CD14-positive monocyte (primary cell): ENCODE measurements at regions of chr1 and their contacts with region 1.

Region 1: DNA sequence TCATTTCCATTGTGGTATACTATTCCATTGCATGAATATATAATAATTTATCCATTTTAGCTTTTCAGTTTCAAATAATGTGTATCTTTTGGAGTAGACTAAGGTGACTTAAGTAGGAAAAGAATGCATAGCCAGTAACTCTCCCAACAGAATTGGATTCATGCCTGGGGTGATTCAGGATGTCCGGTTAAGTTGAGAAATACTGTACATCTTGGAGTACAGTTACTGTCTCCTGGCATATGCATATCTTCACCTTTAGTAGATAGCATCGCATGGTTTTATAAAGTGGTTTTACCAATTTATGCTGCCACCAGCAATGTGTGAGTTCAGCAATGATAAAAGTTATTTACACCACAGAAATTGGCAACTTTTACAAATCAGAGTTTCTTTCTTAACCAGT is 18.6 kb upstream of the SLC6A9 start:
- DNase-seq: no peak
- H3K4me3 ChIP-seq: no peak overlapping the region
- H3K4me3 Mint-ChIP-seq: no peak overlapping the region
- H3K27ac ChIP-seq: no peak overlapping the region
- H3K27ac Mint-ChIP-seq: no peak overlapping the region
- H3K4me1 ChIP-seq: peaks cover 7 to 12% of the 10 kb centered on the region in 2 donors
- H3K4me1 Mint-ChIP-seq: peaks cover 15% of the 10 kb centered on the region
- H3K27me3 ChIP-seq: no peaks in the 10 kb centered on the region
- H3K27me3 Mint-ChIP-seq: peaks cover 0 to 7% (median 0%) of the 10 kb centered on the region in 3 donors
- CTCF ChIP-seq: no peak

Region 2: DNA sequence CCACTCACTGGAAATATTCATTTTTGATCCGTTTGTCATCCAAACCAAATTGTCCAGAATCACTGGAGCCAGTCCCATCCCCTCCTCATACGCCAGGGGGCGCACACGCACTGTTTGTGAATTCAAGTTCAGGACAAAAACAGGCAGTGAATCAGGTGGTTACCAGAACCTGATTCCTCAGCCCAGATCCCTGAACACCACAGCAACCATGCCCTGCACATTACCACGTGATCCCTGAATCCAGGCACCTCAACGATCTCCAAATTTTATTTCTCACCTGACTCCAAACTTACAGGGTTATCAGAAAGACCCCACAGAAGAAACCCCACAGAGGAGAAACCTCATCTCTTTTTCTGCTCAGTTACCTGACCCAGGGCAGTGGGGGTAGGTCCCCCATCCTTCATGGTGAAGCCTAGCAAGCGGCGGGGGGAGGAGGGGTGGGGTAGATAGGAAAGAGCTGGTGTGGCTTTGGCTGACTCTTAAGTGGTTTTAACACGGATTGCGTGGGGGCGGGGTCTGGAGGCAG is 520.6 kb before region 1 on chr1:
- intact Hi-C with region 1: loop called (anchors 5 to 10 kb)
- DNase-seq: peak; percentile 56 to 70 (median 62)
- H3K4me3 ChIP-seq: no peak overlapping the region
- H3K4me3 Mint-ChIP-seq: peak overlapping the region in 1 of 2 donors; percentile 93
- H3K27ac ChIP-seq: no peak overlapping the region
- H3K27ac Mint-ChIP-seq: no peak overlapping the region
- H3K4me1 ChIP-seq: peaks cover 4 to 5% of the 10 kb centered on the region in 2 donors
- H3K4me1 Mint-ChIP-seq: peaks cover 12% of the 10 kb centered on the region
- H3K27me3 ChIP-seq: peaks cover 25 to 35% of the 10 kb centered on the region in 2 donors
- H3K27me3 Mint-ChIP-seq: peaks cover 39 to 48% (median 42%) of the 10 kb centered on the region in 3 donors
- CTCF ChIP-seq: peak; percentile 90

Region 3: GRCh38 chr1:44008259-44008658 is 41.6 kb before region 1 on chr1:
- intact Hi-C with region 1: loop called in 1 of 2 experiments (anchors 5 kb)
- DNase-seq: no peak
- H3K4me3 ChIP-seq: no peak overlapping the region
- H3K4me3 Mint-ChIP-seq: no peak overlapping the region
- H3K27ac ChIP-seq: no peak overlapping the region
- H3K27ac Mint-ChIP-seq: no peak overlapping the region
- H3K4me1 ChIP-seq: no peaks in the 10 kb centered on the region
- H3K4me1 Mint-ChIP-seq: peaks cover 2% of the 10 kb centered on the region
- H3K27me3 ChIP-seq: no peaks in the 10 kb centered on the region
- H3K27me3 Mint-ChIP-seq: peaks cover 4 to 9% (median 4%) of the 10 kb centered on the region in 3 donors
- CTCF ChIP-seq: no peak